Prostate gland (tissue), 2 donors: ENCODE measurements at regions of chrX and their contacts with region 1.

Region 1: GRCh38 chrX:69387567-69388487 is 116.3 kb upstream of the NALF2 start:
- DNase-seq: peak; percentile 27
- H3K4me3 ChIP-seq: no peak overlapping the region
- H3K27ac ChIP-seq: no peak overlapping the region
- H3K4me1 ChIP-seq: no peaks in the 10 kb centered on the region
- H3K27me3 ChIP-seq: no peaks in the 10 kb centered on the region
- CTCF ChIP-seq: peak in 3 of 4 experiments; percentile 50 to 67 (median 61)
- POLR2A ChIP-seq: no peak

Region 2: DNA sequence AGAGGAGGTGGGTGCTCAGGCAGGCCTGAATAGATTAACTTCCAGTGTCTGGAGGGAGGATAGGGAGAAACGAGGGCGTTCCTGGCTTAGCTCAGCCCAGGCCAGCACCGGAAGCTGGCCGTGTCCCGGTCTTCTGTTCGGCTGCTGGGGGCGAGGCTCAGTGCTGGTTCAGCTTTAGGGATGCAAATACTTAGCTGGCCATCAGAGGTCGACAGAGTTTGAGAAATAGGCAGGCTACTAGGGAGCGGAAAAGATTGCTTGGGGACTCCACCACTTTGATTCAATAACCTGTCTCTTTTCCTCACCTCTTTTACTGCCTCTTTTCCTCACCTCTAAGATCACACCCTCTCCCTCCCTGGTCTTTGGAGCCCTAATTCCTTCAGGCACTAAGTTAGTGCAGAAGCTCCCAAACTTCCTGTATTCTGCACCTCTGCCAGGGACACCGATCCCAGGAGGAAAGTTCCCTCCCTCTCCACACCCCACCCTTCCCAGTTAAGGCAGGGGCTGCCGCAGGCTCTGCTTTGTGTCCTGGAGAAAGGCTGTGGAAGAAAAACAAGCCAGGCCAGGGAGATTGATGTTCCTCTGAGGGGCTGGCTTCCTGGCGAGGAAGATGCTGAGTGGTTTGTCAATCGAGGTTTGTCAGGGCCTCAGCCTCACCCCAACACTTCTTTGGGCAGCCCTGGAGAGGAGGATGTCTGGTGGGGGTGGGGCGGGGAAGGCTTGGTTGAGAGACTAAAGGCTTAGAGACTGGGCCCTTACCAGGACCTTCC is 565.0 kb before region 1 on chrX:
- intact Hi-C with region 1: loop called (anchors 2 kb)
- DNase-seq: no peak
- H3K4me3 ChIP-seq: no peak overlapping the region
- H3K27ac ChIP-seq: no peak overlapping the region
- H3K4me1 ChIP-seq: no peaks in the 10 kb centered on the region
- H3K27me3 ChIP-seq: no peaks in the 10 kb centered on the region
- CTCF ChIP-seq: peak in 3 of 4 experiments; percentile 29 to 60 (median 54)
- POLR2A ChIP-seq: no peak

Region 3: GRCh38 chrX:69291116-69291515 is 96.7 kb before region 1 on chrX:
- intact Hi-C with region 1: loop called (anchors 5 kb)
- DNase-seq: no peak
- H3K4me3 ChIP-seq: no peak overlapping the region
- H3K27ac ChIP-seq: no peak overlapping the region
- H3K4me1 ChIP-seq: no peaks in the 10 kb centered on the region
- H3K27me3 ChIP-seq: no peaks in the 10 kb centered on the region
- CTCF ChIP-seq: no peak
- POLR2A ChIP-seq: no peak